Naive thymus-derived CD4-positive, alpha-beta T cell (primary cell): ENCODE measurements at regions of chr6 and their contacts with region 1.

Region 1: DNA sequence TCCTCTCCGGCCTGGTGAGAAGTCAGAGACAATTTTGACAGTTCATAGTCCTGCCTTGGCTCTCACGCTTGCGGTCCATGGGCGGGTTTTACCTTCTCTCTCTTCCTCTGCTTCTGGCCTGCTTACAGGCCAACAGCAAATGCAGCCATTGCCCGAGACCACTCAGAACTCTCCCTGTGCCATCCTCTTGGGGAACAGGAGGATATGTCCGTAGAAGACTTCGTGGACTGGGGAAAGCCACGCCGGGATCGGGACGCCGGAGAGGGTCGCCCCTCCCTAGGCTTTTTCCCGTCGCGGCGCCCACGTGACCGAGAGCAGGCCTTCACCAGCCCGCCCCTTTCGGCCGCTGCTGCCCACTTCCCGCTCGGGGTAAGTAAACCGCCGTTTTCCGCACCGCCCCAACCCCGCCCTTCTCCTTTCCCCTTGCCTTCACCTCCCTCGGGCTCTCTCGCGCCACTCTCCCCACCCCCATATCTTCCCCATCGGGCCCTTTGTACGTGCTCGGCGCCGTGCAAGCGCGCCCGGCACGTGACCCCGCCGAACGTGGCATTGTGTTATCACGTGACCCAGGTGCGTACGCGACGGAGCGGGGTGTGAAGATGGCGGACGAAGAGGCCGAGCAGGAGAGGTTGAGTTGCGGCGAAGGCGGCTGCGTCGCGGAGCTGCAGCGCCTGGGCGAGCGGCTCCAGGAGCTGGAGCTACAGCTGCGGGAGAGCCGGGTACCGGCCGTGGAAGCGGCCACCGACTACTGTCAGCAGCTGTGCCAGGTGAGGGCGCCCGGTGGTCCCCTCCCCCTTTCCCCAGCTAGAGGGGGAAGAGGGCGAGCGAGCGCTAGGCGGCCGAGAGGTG is at the start of gene ZNF292:
- DNase-seq: peak; percentile 82 to 97 (median 94)
- ATAC-seq: peak; percentile 85
- H3K4me3 ChIP-seq: peak within 1 kb of the TSS; percentile 93
- H3K4me3 Mint-ChIP-seq: peak within 1 kb of the TSS; percentile 81 to 99 (median 94)
- H3K27ac ChIP-seq: peak within 1 kb of the TSS; percentile 83
- H3K27ac Mint-ChIP-seq: peak within 1 kb of the TSS; percentile 88 to 99 (median 94)
- H3K4me1 ChIP-seq: peaks cover 40 to 45% of the 10 kb centered on the region in 2 donors
- H3K4me1 Mint-ChIP-seq: peaks cover 34 to 69% (median 55%) of the 10 kb centered on the region in 7 donors
- H3K27me3 ChIP-seq: no peaks in the 10 kb centered on the region
- H3K27me3 Mint-ChIP-seq: peaks cover 0 to 2% (median 0%) of the 10 kb centered on the region in 5 donors
- total RNA-seq, gene ZNF292: 62.4 to 87.5 (median 74.3) TPM

Region 2: GRCh38 chr6:85593438-85594196 is 1561.6 kb before region 1 on chr6 and contains the start of gene SNX14:
- CTCF ChIA-PET with region 1: no interaction called
- POLR2A ChIA-PET with region 1: no interaction called
- intact Hi-C with region 1: loop called in 1 of 2 experiments (anchors 2 kb)
- DNase-seq: peak; percentile 59 to 81 (median 73)
- ATAC-seq: peak; percentile 81
- H3K4me3 ChIP-seq: peak within 1 kb of the TSS; percentile 91
- H3K4me3 Mint-ChIP-seq: peak within 1 kb of the TSS; percentile 88 to 98 (median 96)
- H3K27ac ChIP-seq: peak within 1 kb of the TSS; percentile 86
- H3K27ac Mint-ChIP-seq: peak within 1 kb of the TSS; percentile 81 to 97 (median 93)
- H3K4me1 ChIP-seq: peaks cover 5 to 21% of the 10 kb centered on the region in 2 donors
- H3K4me1 Mint-ChIP-seq: peaks cover 29 to 58% (median 47%) of the 10 kb centered on the region in 7 donors
- H3K27me3 ChIP-seq: no peaks in the 10 kb centered on the region
- H3K27me3 Mint-ChIP-seq: peaks cover 0 to 9% (median 0%) of the 10 kb centered on the region in 5 donors
- total RNA-seq, gene SNX14: 37.3 to 71.8 (median 53.3) TPM

Region 3: DNA sequence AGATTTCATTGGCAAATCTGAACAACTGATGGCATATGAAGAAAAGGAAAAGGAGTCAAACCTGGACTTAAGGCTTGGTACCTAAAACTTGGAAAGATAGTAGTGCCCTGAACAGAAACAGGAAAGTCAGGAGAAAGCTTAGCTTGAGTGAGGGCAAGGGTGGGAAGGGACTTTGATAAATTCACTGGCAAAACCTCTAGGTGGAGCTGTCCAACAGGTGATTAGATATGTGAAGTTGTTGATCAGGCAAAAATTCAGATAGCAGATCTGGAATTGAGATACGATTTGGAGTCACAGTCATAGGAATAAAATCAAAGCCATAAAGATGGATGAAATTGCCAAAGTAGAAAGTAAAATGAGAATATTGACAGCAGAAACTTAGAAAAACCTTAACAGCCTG is 16.0 kb before region 1 on chr6:
- CTCF ChIA-PET with region 1: interaction called, 3 read pairs
- POLR2A ChIA-PET with region 1: interaction called, 5 read pairs
- intact Hi-C with region 1: loop called (anchors 1 kb)
- DNase-seq: peak in 7 of 9 donors; percentile 42 to 72 (median 65)
- ATAC-seq: peak; percentile 82
- H3K4me3 ChIP-seq: no peak overlapping the region
- H3K4me3 Mint-ChIP-seq: peak overlapping the region in 1 of 10 donors; percentile 12
- H3K27ac ChIP-seq: no peak overlapping the region
- H3K27ac Mint-ChIP-seq: no peak overlapping the region
- H3K4me1 ChIP-seq: no peaks in the 10 kb centered on the region
- H3K4me1 Mint-ChIP-seq: peaks cover 0 to 6% (median 4%) of the 10 kb centered on the region in 7 donors
- H3K27me3 ChIP-seq: no peaks in the 10 kb centered on the region
- H3K27me3 Mint-ChIP-seq: peaks cover 0 to 59% (median 18%) of the 10 kb centered on the region in 5 donors

Region 4: GRCh38 chr6:87237804-87238203 is 82.6 kb after region 1 on chr6:
- CTCF ChIA-PET with region 1: no interaction called
- POLR2A ChIA-PET with region 1: interaction called, 3 read pairs
- intact Hi-C with region 1: loop called (anchors 1 to 5 kb)
- DNase-seq: peak in 4 of 9 donors; percentile 6 to 23 (median 18)
- ATAC-seq: peak; percentile 66
- H3K4me3 ChIP-seq: no peak overlapping the region
- H3K4me3 Mint-ChIP-seq: no peak overlapping the region
- H3K27ac ChIP-seq: no peak overlapping the region
- H3K27ac Mint-ChIP-seq: no peak overlapping the region
- H3K4me1 ChIP-seq: no peaks in the 10 kb centered on the region
- H3K4me1 Mint-ChIP-seq: peaks cover 0 to 7% (median 3%) of the 10 kb centered on the region in 7 donors
- H3K27me3 ChIP-seq: no peaks in the 10 kb centered on the region
- H3K27me3 Mint-ChIP-seq: no peaks in the 10 kb centered on the region

Region 5: DNA sequence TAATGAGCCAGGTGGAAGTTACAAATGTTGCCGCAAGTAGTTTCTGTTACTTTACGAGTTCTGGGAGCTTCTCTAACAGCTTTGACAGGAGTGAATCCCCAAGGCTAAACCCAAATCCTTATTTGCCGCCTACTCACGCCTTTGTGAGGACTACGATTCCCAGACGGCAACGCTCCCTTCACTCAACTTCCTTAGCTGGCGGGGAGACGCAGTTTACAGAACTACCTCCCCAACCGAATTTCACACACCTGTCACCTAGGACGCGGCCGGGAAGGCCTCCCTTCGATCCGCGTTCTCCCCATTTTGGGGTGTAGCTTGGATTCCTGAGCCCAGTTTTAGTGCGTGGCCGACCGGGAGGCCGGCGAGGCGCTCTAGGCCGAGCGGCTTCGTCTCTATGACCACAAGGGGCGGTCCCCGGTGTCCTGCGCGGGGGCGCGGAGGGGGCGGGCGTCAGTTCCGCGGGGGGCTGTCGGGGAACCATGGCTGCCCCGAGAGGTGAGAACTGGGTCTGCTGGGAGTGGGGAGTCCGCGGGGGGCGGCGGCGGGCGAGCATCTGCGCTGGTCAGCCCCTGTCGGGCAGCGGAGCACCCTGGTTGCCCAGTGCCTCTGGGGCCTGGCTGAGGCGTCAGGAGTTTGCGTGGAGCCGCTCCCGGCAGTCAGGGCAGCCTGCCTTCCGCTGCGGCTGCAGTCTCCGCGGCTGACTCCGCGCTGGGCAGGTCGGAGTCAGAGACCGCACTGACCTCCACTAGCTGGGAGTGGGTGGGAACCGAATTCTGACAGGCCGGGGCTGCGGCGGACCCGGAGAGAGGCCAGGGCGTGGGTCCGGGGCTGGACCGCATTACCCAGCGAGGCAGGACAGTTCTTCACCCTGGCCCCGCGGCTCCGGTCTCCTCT is 317.6 kb after region 1 on chr6 and contains the start of gene SLC35A1:
- CTCF ChIA-PET with region 1: no interaction called
- POLR2A ChIA-PET with region 1: interaction called, 4 read pairs
- intact Hi-C with region 1: loop called (anchors 1 kb)
- DNase-seq: peak; percentile 78 to 92 (median 87)
- ATAC-seq: peak; percentile 97
- H3K4me3 ChIP-seq: peak within 1 kb of the TSS; percentile 81
- H3K4me3 Mint-ChIP-seq: peak within 1 kb of the TSS; percentile 88 to 99 (median 98)
- H3K27ac ChIP-seq: peak within 1 kb of the TSS; percentile 93
- H3K27ac Mint-ChIP-seq: peak within 1 kb of the TSS; percentile 95 to 100 (median 99)
- H3K4me1 ChIP-seq: peaks cover 9 to 11% of the 10 kb centered on the region in 2 donors
- H3K4me1 Mint-ChIP-seq: peaks cover 14 to 31% (median 20%) of the 10 kb centered on the region in 7 donors
- H3K27me3 ChIP-seq: no peaks in the 10 kb centered on the region
- H3K27me3 Mint-ChIP-seq: peaks cover 2 to 14% (median 9%) of the 10 kb centered on the region in 5 donors
- total RNA-seq, gene SLC35A1: 10.4 to 23.4 (median 15.6) TPM